ENCODE measurements at regions of chr15 and their contacts with region 1.

Region 1: DNA sequence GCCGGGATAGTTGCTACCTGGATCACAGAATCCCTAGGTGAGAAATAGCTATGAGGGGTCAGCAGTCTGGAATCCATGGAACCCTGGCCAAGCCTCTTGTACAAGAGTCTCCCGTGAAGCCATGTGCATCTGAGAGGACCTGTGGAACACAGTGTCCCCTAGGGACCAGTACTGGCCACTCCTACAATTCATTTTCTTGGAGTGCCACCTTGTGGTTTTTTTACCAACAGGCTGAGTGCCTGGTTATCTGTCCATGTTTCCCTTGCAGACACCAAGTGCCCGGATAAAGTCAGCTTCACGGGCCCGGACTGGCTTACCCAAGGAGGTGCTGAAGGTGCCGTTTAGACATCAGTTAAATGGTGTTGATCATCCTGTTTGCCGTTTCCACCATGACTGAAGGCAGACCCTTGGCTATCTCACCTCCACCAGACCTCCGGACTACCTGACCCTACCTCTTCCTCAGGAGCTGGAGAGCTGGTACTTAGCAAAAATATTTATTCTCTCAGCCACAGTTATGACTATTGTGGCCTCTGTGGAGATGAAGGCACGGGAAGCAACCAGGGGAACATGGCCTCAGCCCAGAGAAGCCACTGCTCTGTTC is 93.9 kb downstream of the RBPMS2 start:
- DNase-seq: peak; percentile 72
- ATAC-seq: peak; percentile 97
- H3K4me3 ChIP-seq: no peak overlapping the region
- H3K27ac ChIP-seq: no peak overlapping the region
- H3K4me1 ChIP-seq: no peaks in the 10 kb centered on the region
- H3K27me3 ChIP-seq: no peaks in the 10 kb centered on the region
- CTCF ChIP-seq: peak; percentile 93
- EP300 ChIP-seq: no peak
- POLR2A ChIP-seq: no peak
- RAD21 ChIP-seq: peak; percentile 97

Region 2: DNA sequence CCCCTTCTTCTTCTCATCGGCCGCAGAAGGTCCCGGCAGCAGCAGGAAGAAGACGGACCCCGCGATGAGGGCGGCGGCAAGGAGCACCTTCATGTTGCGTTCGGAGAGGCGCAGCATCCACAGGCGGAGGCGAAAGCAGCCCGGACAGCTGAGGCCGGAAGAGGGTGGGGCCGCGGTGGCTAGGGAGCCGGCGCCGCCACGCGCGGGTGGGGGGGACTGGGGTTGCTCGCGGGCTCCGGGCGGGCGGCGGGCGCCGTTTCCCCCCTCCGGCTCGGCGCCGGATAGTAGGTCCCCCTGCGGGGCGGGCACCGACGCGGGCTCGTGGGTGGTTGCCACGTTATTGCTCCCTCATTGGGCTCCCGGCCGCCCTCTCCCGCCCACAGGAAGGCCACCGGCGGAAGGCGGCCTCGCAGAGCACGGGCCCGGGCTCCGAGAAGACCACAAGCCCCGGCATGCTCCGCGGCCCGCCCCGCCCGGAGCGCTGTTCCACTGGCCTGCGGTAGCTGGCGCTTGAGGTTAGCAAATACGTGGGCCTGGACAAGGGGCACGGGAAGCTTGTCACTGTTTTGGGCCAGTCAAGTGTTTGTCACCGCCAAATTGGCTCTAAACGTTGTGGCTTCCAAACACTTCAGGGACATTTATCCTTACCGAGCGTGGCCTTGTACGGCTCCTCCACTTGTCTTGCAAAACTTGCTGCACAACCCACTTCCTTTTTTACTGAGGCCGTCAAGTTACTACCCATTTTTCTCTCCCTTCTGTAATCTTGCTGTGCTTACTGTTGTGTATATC is 518.5 kb before region 1 on chr15 and contains the start of gene PPIB:
- CTCF ChIA-PET with region 1: no interaction called
- POLR2A ChIA-PET with region 1: no interaction called
- in situ Hi-C with region 1: no loop called
- intact Hi-C with region 1: loop called (anchors 5 kb)
- DNase-seq: peak; percentile 93
- ATAC-seq: peak; percentile 96
- H3K4me3 ChIP-seq: peak within 1 kb of the TSS; percentile 95 to 98 (median 97)
- H3K27ac ChIP-seq: peak within 1 kb of the TSS; percentile 90
- H3K4me1 ChIP-seq: peaks cover 53% of the 10 kb centered on the region
- H3K27me3 ChIP-seq: no peaks in the 10 kb centered on the region; a peak in 1 of 5 replicates
- CTCF ChIP-seq: peak; percentile 89
- EP300 ChIP-seq: 0 out of 4 replicates have a peak, but pooled peaks of 1 of the 2 experiments have one; percentile 19
- POLR2A ChIP-seq: peak; percentile 88
- RAD21 ChIP-seq: peak; percentile 66
- total RNA-seq, gene PPIB: 476 and 882 TPM in 2 replicates

Region 3: GRCh38 chr15:64209680-64210334 is 471.7 kb before region 1 on chr15:
- CTCF ChIA-PET with region 1: interaction called, 4 read pairs
- POLR2A ChIA-PET with region 1: no interaction called
- in situ Hi-C with region 1: loop called (anchors 25 kb)
- intact Hi-C with region 1: no loop called
- DNase-seq: peak; percentile 32
- ATAC-seq: no peak
- H3K4me3 ChIP-seq: no peak overlapping the region
- H3K27ac ChIP-seq: no peak overlapping the region
- H3K4me1 ChIP-seq: no peaks in the 10 kb centered on the region
- H3K27me3 ChIP-seq: no peaks in the 10 kb centered on the region
- CTCF ChIP-seq: peak; percentile 38
- EP300 ChIP-seq: no peak
- POLR2A ChIP-seq: no peak
- RAD21 ChIP-seq: peak; percentile 51; the same call in 1 of the 2 replicates

Region 4: GRCh38 chr15:64430000-64430735 is 251.4 kb before region 1 on chr15:
- CTCF ChIA-PET with region 1: interaction called, 11 read pairs
- POLR2A ChIA-PET with region 1: no interaction called
- in situ Hi-C with region 1: no loop called
- intact Hi-C with region 1: loop called (anchors 1 kb)
- DNase-seq: no peak
- ATAC-seq: no peak
- H3K4me3 ChIP-seq: no peak overlapping the region
- H3K27ac ChIP-seq: no peak overlapping the region
- H3K4me1 ChIP-seq: no peaks in the 10 kb centered on the region
- H3K27me3 ChIP-seq: no peaks in the 10 kb centered on the region
- CTCF ChIP-seq: no peak
- EP300 ChIP-seq: no peak
- POLR2A ChIP-seq: no peak
- RAD21 ChIP-seq: no peak

Region 5: DNA sequence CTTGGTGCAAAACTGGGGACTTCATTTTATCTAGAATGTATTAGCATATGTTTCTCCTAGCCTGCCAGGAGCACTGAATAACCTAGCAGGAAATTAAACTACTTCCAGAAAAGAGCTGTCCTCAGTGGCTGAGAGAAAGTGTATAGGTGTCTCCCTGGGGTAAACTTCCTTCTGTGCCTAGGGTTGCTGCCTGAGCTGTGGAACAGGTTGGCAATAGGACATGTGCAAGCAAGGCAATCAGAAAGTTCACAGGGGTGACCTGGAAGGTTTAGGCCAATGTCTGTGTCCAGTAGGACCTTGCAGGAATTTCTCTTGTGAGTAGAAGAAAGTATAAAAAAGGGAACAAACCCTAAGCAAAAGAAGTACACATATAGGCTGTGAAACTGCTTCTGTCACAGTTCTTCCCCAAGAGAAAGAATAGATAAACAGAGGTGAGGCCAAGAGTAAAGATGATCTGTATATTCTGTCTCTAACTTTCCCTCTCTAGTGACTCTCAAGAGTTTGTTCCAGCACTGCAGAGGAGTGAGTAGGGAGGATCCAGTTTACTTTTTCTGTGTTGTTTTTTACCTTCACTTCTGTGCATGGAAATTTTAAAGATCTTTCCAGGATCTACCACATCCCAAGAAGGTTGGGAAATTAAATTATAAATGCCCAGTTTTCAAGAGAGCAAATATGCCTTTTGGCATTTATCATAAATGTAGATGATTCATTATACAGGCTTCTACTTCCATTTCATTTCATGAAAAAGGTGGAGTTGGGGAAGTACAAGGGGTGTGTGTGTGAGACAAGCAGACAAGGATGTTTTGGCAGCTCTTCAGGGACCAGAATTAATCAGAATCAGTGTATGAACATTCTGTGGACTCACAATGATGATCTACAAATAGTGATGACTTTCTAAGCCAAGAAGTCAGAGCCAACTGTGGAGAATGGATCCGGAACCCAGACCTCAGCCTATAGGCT is 61.4 kb before region 1 on chr15:
- CTCF ChIA-PET with region 1: no interaction called
- POLR2A ChIA-PET with region 1: no interaction called
- in situ Hi-C with region 1: no loop called
- intact Hi-C with region 1: no loop called
- DNase-seq: no peak
- ATAC-seq: no peak; the same call in 2 of the 3 replicates
- H3K4me3 ChIP-seq: no peak overlapping the region
- H3K27ac ChIP-seq: no peak overlapping the region
- H3K4me1 ChIP-seq: peaks cover 20% of the 10 kb centered on the region
- H3K27me3 ChIP-seq: no peaks in the 10 kb centered on the region; a peak in 1 of 5 replicates
- CTCF ChIP-seq: no peak
- EP300 ChIP-seq: no peak
- POLR2A ChIP-seq: no peak
- RAD21 ChIP-seq: no peak

Region 6: GRCh38 chr15:64731012-64731806 is 49.7 kb after region 1 on chr15:
- CTCF ChIA-PET with region 1: interaction called, 56 read pairs
- POLR2A ChIA-PET with region 1: no interaction called
- in situ Hi-C with region 1: loop called (anchors 5 kb)
- intact Hi-C with region 1: loop called (anchors 1 kb)
- DNase-seq: peak; percentile 67
- ATAC-seq: peak; percentile 79
- H3K4me3 ChIP-seq: no peak overlapping the region
- H3K27ac ChIP-seq: no peak overlapping the region
- H3K4me1 ChIP-seq: peaks cover 33% of the 10 kb centered on the region
- H3K27me3 ChIP-seq: peaks cover 0 to 12% of the 10 kb centered on the region in 2 experiments; a peak in 2 of 5 replicates
- CTCF ChIP-seq: peak; percentile 96
- EP300 ChIP-seq: no peak
- POLR2A ChIP-seq: no peak
- RAD21 ChIP-seq: peak; percentile 92

Region 7: DNA sequence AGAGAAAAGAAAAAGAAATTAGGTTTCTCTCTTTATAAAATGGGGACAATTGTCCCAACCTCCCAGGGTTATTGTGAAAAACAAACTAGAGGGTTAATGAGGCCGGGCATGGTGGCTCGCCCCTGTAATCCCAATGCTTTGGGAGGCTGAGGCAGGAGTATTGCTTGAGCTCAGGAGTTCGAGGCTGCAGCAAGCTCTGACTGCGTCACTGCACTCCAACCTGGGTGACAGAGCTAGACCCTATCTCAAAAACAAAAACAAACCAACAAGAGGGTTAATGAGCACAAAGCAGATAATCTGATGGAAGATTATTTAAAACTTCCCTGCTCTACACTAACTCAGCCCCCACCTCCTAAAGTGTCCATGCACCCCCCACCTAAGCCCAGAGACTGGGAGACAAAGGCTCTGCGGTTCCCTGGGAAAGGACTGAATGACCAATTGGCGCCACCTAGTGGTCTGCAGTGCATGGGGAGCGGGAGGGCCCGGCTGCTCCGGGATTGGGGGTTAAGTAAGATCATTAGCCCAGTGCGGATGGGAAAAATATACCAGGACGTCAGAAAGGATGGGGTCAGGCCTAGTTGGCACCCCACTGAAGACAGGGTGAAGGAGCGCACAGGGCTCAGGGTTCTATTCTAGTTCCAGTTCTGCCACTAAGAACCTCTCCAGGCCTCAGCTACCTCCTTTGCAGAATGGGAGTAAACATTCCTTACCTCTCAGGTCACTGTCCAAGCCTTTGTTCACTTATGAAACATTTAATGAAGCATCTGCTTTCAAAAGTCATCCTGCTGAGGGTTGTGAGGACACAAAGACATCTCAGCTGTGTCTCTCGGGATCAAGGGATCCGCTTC is 128.3 kb after region 1 on chr15:
- CTCF ChIA-PET with region 1: no interaction called
- POLR2A ChIA-PET with region 1: no interaction called
- in situ Hi-C with region 1: no loop called
- intact Hi-C with region 1: loop called (anchors 5 kb)
- DNase-seq: peak; percentile 61
- ATAC-seq: peak; percentile 76
- H3K4me3 ChIP-seq: no peak overlapping the region
- H3K27ac ChIP-seq: no peak overlapping the region
- H3K4me1 ChIP-seq: peaks cover 29% of the 10 kb centered on the region
- H3K27me3 ChIP-seq: peaks cover 1 to 17% of the 10 kb centered on the region in 2 experiments; a peak in 2 of 5 replicates
- CTCF ChIP-seq: peak; percentile 94
- EP300 ChIP-seq: no peak
- POLR2A ChIP-seq: no peak
- RAD21 ChIP-seq: peak; percentile 83

Measured in HepG2 (cell line).